MCF 10A (cell line): ENCODE measurements at regions of chr7 and their contacts with region 1.

Region 1: GRCh38 chr7:40843338-40843985 is 708.7 kb downstream of the SUGCT start:
- DNase-seq: peak; percentile 72
- H3K4me3 Mint-ChIP-seq: peak overlapping the region; percentile 11
- H3K27ac Mint-ChIP-seq: peak overlapping the region; percentile 81
- H3K4me1 Mint-ChIP-seq: peaks cover 32% of the 10 kb centered on the region
- H3K27me3 Mint-ChIP-seq: no peaks in the 10 kb centered on the region
- CTCF ChIP-seq: no peak

Region 2: DNA sequence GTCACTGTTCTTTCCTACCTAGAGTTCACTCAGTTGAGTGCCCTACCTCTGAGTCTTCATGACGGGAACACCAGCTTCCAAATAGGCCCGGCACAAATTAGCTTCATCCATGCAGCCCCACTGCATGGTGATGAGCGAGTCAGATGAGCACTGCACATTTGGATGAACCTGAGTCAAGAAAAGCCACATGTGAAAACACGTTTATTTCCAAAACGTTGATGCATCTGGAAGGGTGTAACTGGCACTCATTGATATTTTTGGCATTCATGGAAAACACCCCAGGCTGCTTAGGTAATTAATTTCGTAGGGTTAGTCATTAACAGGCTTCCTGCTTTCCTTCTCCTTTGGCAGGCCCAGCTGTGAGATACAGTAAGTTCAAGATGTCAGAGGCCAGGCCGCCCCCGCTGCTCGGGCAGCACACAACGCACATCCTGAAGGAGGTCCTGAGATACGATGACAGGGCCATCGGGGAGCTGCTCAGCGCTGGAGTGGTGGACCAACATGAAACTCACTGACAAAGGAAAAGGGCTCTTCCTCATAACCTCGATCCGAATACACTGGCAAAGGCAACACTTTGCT is 16.6 kb after region 1 on chr7:
- CTCF ChIA-PET with region 1: interaction called, 4 read pairs
- POLR2A ChIA-PET with region 1: interaction called, 12 read pairs
- intact Hi-C with region 1: no loop called
- DNase-seq: peak; percentile 52
- H3K4me3 Mint-ChIP-seq: no peak overlapping the region
- H3K27ac Mint-ChIP-seq: no peak overlapping the region
- H3K4me1 Mint-ChIP-seq: peaks cover 14% of the 10 kb centered on the region
- H3K27me3 Mint-ChIP-seq: no peaks in the 10 kb centered on the region
- CTCF ChIP-seq: no peak

Region 3: GRCh38 chr7:40870108-40870507 is 26.6 kb after region 1 on chr7:
- CTCF ChIA-PET with region 1: no interaction called
- POLR2A ChIA-PET with region 1: no interaction called
- intact Hi-C with region 1: no loop called
- DNase-seq: no peak
- H3K4me3 Mint-ChIP-seq: no peak overlapping the region
- H3K27ac Mint-ChIP-seq: no peak overlapping the region
- H3K4me1 Mint-ChIP-seq: no peaks in the 10 kb centered on the region
- H3K27me3 Mint-ChIP-seq: no peaks in the 10 kb centered on the region
- CTCF ChIP-seq: no peak

Region 4: DNA sequence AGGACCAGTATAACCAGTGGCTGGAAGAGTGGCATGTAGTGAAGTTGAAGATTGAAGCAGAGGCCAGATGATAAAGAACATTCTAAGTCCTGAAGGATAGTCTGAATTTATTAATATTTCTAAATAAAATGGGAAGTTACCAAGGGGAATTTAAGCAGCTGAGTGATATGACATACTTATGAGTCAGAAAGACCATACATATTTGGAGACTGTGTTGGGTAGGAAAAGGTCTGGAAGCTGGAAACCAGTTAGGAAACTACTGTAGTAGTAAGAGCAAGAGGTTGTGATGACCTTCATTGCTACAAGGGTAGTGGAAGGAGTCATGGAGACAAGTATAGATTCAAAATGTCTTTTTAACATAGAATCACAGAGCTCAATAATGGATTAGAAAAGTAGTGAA is 43.6 kb after region 1 on chr7:
- CTCF ChIA-PET with region 1: no interaction called
- POLR2A ChIA-PET with region 1: no interaction called
- intact Hi-C with region 1: no loop called
- DNase-seq: no peak
- H3K4me3 Mint-ChIP-seq: no peak overlapping the region
- H3K27ac Mint-ChIP-seq: no peak overlapping the region
- H3K4me1 Mint-ChIP-seq: peaks cover 14% of the 10 kb centered on the region
- H3K27me3 Mint-ChIP-seq: no peaks in the 10 kb centered on the region
- CTCF ChIP-seq: no peak

Region 5: GRCh38 chr7:40922316-40923068 is 79.0 kb after region 1 on chr7:
- CTCF ChIA-PET with region 1: interaction called, 3 read pairs
- POLR2A ChIA-PET with region 1: interaction called, 4 read pairs
- intact Hi-C with region 1: loop called (anchors 5 kb)
- DNase-seq: peak; percentile 95
- H3K4me3 Mint-ChIP-seq: no peak overlapping the region
- H3K27ac Mint-ChIP-seq: peak overlapping the region; percentile 92
- H3K4me1 Mint-ChIP-seq: peaks cover 51% of the 10 kb centered on the region
- H3K27me3 Mint-ChIP-seq: no peaks in the 10 kb centered on the region
- CTCF ChIP-seq: no peak